ENCODE measurements at regions of chr10 and their contacts with region 1.

Region 1: DNA sequence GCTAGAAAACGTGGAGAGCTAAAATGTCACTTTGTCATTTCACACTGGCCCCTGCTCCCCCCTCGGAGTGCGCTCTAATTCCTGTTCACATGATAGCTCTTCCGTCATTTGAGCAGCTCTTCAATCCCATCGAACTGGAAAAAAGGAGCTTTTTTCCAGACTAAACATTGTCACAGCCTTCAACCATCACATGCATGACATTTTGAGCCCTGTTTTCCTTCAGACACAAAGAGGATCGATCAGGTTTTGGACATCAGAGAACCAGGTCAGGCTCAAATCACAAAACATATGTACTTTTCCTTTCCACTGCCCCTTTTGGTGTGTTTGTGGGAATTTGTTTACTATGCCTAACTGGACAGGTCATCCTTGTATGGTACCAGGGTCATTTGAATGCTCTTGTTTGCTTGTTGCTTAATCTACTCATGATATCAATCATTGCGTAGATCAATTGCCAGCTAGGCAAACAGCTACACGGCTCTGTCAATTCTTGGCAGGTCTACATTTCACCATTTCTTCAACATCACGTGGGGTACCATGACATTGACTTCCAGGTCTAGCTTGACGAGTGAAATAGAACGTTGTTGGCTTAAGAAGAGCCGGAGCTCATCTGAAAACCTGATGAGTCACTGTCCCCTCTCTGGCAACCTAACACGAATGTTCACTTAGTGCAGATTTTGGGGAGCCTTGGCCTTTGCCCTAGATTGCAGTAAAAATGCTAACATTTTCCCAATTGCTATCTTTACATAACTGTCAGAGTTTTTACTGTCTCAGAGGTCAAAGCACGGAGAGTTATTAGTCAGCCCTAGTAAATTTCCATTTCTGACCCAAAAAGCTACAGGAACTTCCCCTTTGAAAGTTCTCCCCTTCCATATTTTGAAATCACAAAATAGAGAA is 87.3 kb downstream of the LYZL2 start:
- DNase-seq: no peak
- ATAC-seq: peak; percentile 68
- H3K4me3 ChIP-seq: peak overlapping the region; percentile 19; the same call in 1 of the 2 replicates
- H3K27ac ChIP-seq: peak overlapping the region; percentile 39
- H3K4me1 ChIP-seq: peaks cover 30% of the 10 kb centered on the region
- H3K27me3 ChIP-seq: no peaks in the 10 kb centered on the region
- CTCF ChIP-seq: no peak
- EP300 ChIP-seq: peak in 1 of 2 experiments; percentile 27; a peak in 1 of 4 replicates
- POLR2A ChIP-seq: no peak
- RAD21 ChIP-seq: no peak

Region 2: DNA sequence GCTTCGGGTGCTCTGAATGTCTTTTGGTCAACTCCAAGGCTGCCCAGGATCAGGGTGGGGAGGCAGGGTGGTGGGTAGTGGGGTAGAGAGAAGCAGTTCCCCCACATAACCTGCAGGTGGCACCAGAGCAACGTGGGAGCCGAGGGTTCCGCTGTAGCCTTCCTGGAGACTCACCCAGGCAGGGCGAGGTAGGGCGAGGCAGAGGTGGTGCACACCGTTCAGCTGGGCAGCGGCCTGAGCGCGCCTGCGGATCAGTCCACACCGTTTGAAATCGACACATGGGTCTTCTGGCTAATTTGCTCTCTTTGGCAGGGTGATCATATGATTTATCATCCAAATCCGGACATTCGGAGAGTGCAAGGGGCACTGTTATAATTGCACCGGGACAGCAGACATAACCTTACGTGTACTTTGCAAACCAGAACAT is 149.7 kb before region 1 on chr10:
- CTCF ChIA-PET with region 1: interaction called, 23 read pairs
- POLR2A ChIA-PET with region 1: no interaction called
- RAD21 ChIA-PET with region 1: interaction called, 4 read pairs
- SMC1A ChIA-PET with region 1: interaction called, 8 read pairs
- in situ Hi-C with region 1: no loop called
- intact Hi-C with region 1: no loop called
- DNase-seq: peak; percentile 31
- ATAC-seq: peak; percentile 100
- H3K4me3 ChIP-seq: no peak overlapping the region
- H3K27ac ChIP-seq: no peak overlapping the region
- H3K4me1 ChIP-seq: no peaks in the 10 kb centered on the region
- H3K27me3 ChIP-seq: no peaks in the 10 kb centered on the region
- CTCF ChIP-seq: peak; percentile 81 to 100 (median 97); a peak in 5 of 6 replicates
- EP300 ChIP-seq: no peak
- POLR2A ChIP-seq: no peak
- RAD21 ChIP-seq: peak; percentile 97

Measured in GM12878 (cell line).